Panc1 (cell line): ENCODE measurements at regions of chr7 and their contacts with region 1.

Region 1: GRCh38 chr7:99118077-99118476 is 25.8 kb downstream of the SMURF1 start:
- DNase-seq: no peak
- ATAC-seq: no peak
- H3K4me3 ChIP-seq: no peak overlapping the region
- H3K27ac ChIP-seq: no peak overlapping the region
- H3K4me1 ChIP-seq: peaks cover 15% of the 10 kb centered on the region
- H3K27me3 ChIP-seq: no peaks in the 10 kb centered on the region
- CTCF ChIP-seq: no peak

Region 2: GRCh38 chr7:98448766-98449165 is 669.3 kb before region 1 on chr7:
- CTCF ChIA-PET with region 1: no interaction called
- POLR2A ChIA-PET with region 1: no interaction called
- in situ Hi-C with region 1: no loop called
- intact Hi-C with region 1: no loop called
- DNase-seq: no peak
- ATAC-seq: no peak
- H3K4me3 ChIP-seq: no peak overlapping the region
- H3K27ac ChIP-seq: no peak overlapping the region
- H3K4me1 ChIP-seq: no peaks in the 10 kb centered on the region
- H3K27me3 ChIP-seq: no peaks in the 10 kb centered on the region
- CTCF ChIP-seq: no peak

Region 3: DNA sequence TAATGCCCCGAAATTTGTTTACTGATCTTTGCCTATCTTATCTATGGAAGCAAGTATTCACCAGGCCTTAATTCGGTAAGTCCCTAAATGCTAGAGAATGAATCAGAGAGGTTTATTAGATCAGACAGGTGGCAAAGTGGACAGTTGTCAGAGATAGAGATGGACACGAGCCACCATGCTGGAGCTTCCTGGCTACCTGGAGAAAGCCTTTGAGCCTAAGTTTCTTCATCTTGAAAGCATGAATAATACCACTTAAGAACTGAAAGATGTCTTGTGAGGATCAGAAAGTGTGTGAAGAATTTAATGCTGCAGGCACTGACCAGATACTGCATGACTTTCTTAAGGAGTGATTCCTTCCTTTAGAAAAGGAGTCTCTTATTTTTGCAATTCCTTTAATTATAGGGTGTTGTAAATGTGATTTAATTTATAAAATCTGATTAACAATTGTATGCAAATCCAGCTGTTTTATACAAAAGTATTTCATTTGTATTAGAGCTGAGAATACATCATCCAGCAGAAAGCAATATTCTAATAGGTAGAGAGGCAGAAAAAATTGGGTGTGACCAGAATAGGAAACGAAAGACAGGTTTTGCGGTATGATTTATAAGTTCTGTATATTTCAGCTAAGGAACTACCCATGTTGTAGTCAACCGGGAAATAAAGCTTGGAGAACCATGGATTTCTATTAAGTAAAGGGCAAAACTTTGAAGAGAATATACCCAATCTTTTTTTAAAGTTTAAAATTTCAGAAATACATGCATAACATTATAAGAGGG is 56.9 kb before region 1 on chr7:
- CTCF ChIA-PET with region 1: no interaction called
- POLR2A ChIA-PET with region 1: interaction called, 16 read pairs
- in situ Hi-C with region 1: no loop called
- intact Hi-C with region 1: no loop called
- DNase-seq: no peak
- ATAC-seq: no peak
- H3K4me3 ChIP-seq: no peak overlapping the region
- H3K27ac ChIP-seq: no peak overlapping the region
- H3K4me1 ChIP-seq: no peaks in the 10 kb centered on the region
- H3K27me3 ChIP-seq: no peaks in the 10 kb centered on the region
- CTCF ChIP-seq: no peak

Region 4: GRCh38 chr7:99489235-99489634 is 371.2 kb after region 1 on chr7:
- CTCF ChIA-PET with region 1: no interaction called
- POLR2A ChIA-PET with region 1: no interaction called
- in situ Hi-C with region 1: no loop called
- intact Hi-C with region 1: no loop called
- DNase-seq: no peak
- ATAC-seq: peak; percentile 47; the same call in 1 of the 2 replicates
- H3K4me3 ChIP-seq: no peak overlapping the region
- H3K27ac ChIP-seq: no peak overlapping the region
- H3K4me1 ChIP-seq: no peaks in the 10 kb centered on the region
- H3K27me3 ChIP-seq: no peaks in the 10 kb centered on the region
- CTCF ChIP-seq: no peak

Region 5: GRCh38 chr7:99693427-99694200 is 575.5 kb after region 1 on chr7:
- CTCF ChIA-PET with region 1: no interaction called
- POLR2A ChIA-PET with region 1: no interaction called
- in situ Hi-C with region 1: no loop called
- intact Hi-C with region 1: no loop called
- DNase-seq: no peak
- ATAC-seq: no peak
- H3K4me3 ChIP-seq: no peak overlapping the region
- H3K27ac ChIP-seq: no peak overlapping the region
- H3K4me1 ChIP-seq: no peaks in the 10 kb centered on the region
- H3K27me3 ChIP-seq: peaks cover 5% of the 10 kb centered on the region; the same call in 1 of the 2 replicates
- CTCF ChIP-seq: no peak